Transverse colon (tissue), 4 donors: ENCODE measurements at regions of chr12 and their contacts with region 1.

Region 1: DNA sequence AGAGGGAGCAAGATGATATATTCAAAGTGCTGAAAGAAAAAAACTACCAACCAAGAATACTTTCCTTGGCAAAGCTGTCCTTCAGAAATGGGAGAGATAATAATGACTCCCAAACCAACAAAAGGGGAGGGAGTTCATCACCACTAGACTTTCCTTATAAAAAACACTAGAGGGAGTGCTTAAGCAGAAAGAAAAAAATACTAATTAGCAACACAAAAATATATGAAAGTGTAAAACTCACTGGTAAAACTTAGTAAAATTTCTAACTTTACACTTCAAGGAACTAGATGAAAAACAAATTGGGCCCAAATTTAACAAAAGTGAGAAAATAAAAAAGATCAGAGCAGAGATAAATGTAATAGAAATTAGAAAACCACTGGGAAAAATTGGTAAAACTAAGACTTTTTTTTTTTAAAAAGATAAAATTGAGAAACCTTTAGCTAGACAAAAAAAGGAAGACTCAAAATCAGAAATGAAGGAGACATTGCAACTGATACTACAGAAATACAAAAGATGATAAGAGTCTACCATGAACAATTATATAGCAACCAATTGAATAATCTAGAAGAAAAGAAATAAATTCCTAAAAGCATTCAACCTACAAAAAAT is 60.4 kb upstream of the FAR2 start:
- DNase-seq: no peak
- H3K4me3 ChIP-seq: no peak overlapping the region
- H3K27ac ChIP-seq: no peak overlapping the region
- H3K4me1 ChIP-seq: no peaks in the 10 kb centered on the region
- H3K27me3 ChIP-seq: no peaks in the 10 kb centered on the region
- CTCF ChIP-seq: peak; percentile 38 to 64 (median 50)
- EP300 ChIP-seq: no peak
- POLR2A ChIP-seq: no peak

Region 2: DNA sequence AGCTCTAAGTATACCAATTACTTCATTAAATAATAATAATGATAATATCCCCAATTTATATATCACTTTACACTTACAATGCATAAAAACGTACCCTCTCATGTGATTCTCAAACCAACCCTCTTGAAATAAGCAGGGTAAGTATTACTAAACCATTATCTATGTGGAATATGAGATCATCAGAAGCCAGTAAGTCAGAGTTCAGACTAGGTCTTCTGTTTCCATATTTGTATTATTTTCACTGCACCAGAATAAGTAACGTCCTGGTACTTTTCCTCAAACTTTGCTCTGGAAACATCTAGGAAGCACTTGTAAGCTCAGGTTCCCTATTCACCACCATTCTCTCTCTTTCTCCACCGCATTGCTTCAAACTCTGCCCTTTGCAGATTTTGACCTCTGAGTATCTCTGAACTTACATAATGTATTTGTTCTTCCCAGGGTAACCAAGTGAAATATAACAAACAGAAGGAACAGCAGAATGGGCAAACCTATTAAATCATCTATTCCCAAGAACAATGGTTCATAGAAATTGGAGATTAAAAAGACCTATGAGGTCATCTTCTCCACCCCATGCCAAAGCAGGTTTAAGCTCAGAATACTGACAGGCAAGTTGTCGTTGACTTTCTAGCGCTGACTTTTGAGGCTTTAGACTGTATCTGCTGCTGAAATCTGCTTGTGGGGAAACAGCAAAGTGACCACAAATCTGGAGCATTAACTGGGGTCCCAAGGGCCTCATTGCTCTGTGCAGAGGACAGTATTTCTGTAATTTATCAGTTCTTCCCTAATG is 101.0 kb before region 1 on chr12:
- in situ Hi-C with region 1: no loop called
- intact Hi-C with region 1: no loop called
- DNase-seq: no peak
- H3K4me3 ChIP-seq: no peak overlapping the region
- H3K27ac ChIP-seq: no peak overlapping the region
- H3K4me1 ChIP-seq: no peaks in the 10 kb centered on the region
- H3K27me3 ChIP-seq: no peaks in the 10 kb centered on the region
- CTCF ChIP-seq: no peak
- EP300 ChIP-seq: no peak
- POLR2A ChIP-seq: no peak

Region 3: GRCh38 chr12:29309320-29309902 is 220.7 kb after region 1 on chr12:
- in situ Hi-C with region 1: loop called in 1 of 4 experiments (anchors 10 kb)
- intact Hi-C with region 1: no loop called
- DNase-seq: no peak
- H3K4me3 ChIP-seq: no peak overlapping the region
- H3K27ac ChIP-seq: no peak overlapping the region
- H3K4me1 ChIP-seq: peaks cover 0 to 14% (median 3%) of the 10 kb centered on the region in 4 donors
- H3K27me3 ChIP-seq: no peaks in the 10 kb centered on the region
- CTCF ChIP-seq: peak in 1 of 5 experiments; percentile 13
- EP300 ChIP-seq: no peak
- POLR2A ChIP-seq: no peak